CD4-positive, alpha-beta T cell (primary cell): ENCODE measurements at regions of chr10 and their contacts with region 1.

Region 1: GRCh38 chr10:9097206-9097985 is 1042.9 kb downstream of the GATA3 start:
- DNase-seq: peak in 3 of 14 experiments; percentile 58 to 81 (median 70)
- ATAC-seq: peak; percentile 62
- H3K4me3 ChIP-seq: no peak overlapping the region
- H3K4me3 Mint-ChIP-seq: peak overlapping the region; percentile 72
- H3K27ac ChIP-seq: no peak overlapping the region
- H3K27ac Mint-ChIP-seq: peak overlapping the region; percentile 88
- H3K4me1 ChIP-seq: peaks cover 17% of the 10 kb centered on the region
- H3K4me1 Mint-ChIP-seq: peaks cover 43% of the 10 kb centered on the region
- H3K27me3 ChIP-seq: no peaks in the 10 kb centered on the region
- H3K27me3 Mint-ChIP-seq: no peaks in the 10 kb centered on the region
- CTCF ChIP-seq: no peak

Region 2: GRCh38 chr10:8138471-8138870 is 958.9 kb before region 1 on chr10:
- CTCF ChIA-PET with region 1: no interaction called
- POLR2A ChIA-PET with region 1: no interaction called
- intact Hi-C with region 1: loop called in 1 of 2 experiments (anchors 2 kb)
- DNase-seq: no peak
- ATAC-seq: no peak
- H3K4me3 ChIP-seq: no peak overlapping the region
- H3K4me3 Mint-ChIP-seq: peak overlapping the region; percentile 88
- H3K27ac ChIP-seq: no peak overlapping the region
- H3K27ac Mint-ChIP-seq: peak overlapping the region; percentile 90
- H3K4me1 ChIP-seq: peaks cover 23% of the 10 kb centered on the region
- H3K4me1 Mint-ChIP-seq: peaks cover 30% of the 10 kb centered on the region
- H3K27me3 ChIP-seq: no peaks in the 10 kb centered on the region
- H3K27me3 Mint-ChIP-seq: no peaks in the 10 kb centered on the region
- CTCF ChIP-seq: no peak

Region 3: DNA sequence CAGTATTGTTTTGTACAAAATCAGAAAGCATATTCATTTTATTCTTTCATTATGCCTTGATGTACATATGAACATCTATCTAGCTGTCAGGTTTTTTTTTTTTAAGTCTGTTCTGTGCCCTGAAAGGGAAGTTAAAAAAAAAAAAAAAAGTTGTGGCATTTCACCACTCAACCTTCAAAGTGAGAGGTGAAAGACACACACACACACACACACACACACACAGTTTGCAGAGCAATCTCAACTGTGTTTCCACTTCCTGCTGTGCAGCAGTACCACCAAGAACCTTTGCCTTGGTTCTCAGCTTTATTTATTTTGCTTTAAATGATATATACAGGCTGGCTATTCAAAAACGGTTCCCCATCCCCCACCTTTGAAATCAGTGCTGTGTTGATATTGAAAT is 87.3 kb before region 1 on chr10:
- CTCF ChIA-PET with region 1: no interaction called
- POLR2A ChIA-PET with region 1: interaction called, 34 read pairs
- intact Hi-C with region 1: loop called (anchors 2 to 5 kb)
- DNase-seq: peak in 10 of 14 experiments; percentile 8 to 85 (median 54)
- ATAC-seq: peak; percentile 88
- H3K4me3 ChIP-seq: no peak overlapping the region
- H3K4me3 Mint-ChIP-seq: peak overlapping the region; percentile 76
- H3K27ac ChIP-seq: no peak overlapping the region
- H3K27ac Mint-ChIP-seq: peak overlapping the region; percentile 85
- H3K4me1 ChIP-seq: peaks cover 8% of the 10 kb centered on the region
- H3K4me1 Mint-ChIP-seq: peaks cover 63% of the 10 kb centered on the region
- H3K27me3 ChIP-seq: no peaks in the 10 kb centered on the region
- H3K27me3 Mint-ChIP-seq: no peaks in the 10 kb centered on the region
- CTCF ChIP-seq: no peak

Region 4: DNA sequence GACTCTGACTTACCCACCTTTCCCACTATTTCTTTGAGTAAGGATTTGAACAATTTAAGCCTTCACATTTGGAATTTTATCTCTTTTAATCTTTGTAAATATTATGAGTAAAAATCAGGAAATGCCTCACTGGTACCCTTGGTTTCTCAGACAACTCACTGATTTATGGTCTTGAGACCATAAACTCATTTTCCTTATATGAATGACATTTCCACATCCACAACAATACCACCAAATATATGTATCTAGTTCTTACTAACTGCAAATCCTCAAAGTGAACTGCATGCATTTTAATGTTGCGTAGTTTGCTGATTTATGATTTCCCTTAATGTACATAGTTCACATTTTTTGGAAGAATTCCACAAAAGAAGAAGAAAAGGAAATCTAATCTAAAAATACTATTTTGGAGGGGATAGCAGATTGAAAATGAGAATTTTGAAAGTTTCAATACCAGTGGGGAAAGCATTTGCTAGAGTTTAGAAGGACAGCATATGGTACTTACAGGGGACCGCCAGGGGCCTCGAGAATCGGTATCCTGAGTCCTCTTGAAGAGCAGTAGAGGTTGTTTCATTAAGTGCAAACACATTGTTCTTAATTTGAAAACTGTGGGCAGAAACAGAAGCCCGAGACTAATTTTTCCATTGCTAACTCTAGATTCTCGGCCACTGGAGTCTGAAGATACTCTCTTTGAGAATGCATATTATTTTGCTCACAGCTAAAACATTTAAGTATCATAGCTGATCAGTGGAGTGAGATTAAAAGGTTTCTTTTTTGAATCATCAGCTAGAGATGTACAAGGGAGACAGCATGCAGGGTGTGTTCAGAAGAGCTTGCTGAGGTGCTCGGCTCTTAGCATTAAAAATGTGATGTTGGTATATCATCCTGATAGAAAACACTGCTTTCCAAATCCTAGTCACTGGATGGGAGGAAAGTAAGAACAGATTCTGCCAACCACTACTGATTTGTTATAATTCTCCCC is 78.9 kb before region 1 on chr10:
- CTCF ChIA-PET with region 1: no interaction called
- POLR2A ChIA-PET with region 1: interaction called, 9 read pairs
- intact Hi-C with region 1: loop called in 1 of 2 experiments (anchors 5 kb)
- DNase-seq: no peak
- ATAC-seq: no peak
- H3K4me3 ChIP-seq: peak overlapping the region; percentile 31
- H3K4me3 Mint-ChIP-seq: peak overlapping the region; percentile 46
- H3K27ac ChIP-seq: no peak overlapping the region
- H3K27ac Mint-ChIP-seq: peak overlapping the region; percentile 58
- H3K4me1 ChIP-seq: no peaks in the 10 kb centered on the region
- H3K4me1 Mint-ChIP-seq: peaks cover 9% of the 10 kb centered on the region
- H3K27me3 ChIP-seq: no peaks in the 10 kb centered on the region
- H3K27me3 Mint-ChIP-seq: no peaks in the 10 kb centered on the region
- CTCF ChIP-seq: no peak

Region 5: DNA sequence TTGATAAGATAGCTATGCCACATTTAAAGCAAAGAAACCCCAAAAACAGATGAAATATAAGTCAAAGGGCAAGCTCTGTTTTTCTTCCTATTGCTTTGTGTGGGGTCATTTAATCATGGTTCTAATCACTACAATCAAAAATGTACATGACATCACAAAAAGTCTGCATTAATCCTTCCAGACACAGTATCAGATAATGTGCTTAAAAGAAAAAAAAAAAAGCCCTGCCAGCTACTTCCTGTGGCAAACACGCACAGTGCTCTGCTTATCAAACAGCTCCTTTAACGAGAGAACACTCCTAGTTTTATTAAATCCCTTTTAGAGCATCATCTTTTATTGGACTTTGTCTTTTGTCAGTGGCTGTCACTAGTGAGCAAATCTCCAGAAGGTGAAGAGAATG is 37.1 kb before region 1 on chr10:
- CTCF ChIA-PET with region 1: interaction called, 3 read pairs
- POLR2A ChIA-PET with region 1: interaction called, 11 read pairs
- intact Hi-C with region 1: loop called in 1 of 2 experiments (anchors 1 kb)
- DNase-seq: peak in 3 of 14 experiments; percentile 17 to 20 (median 19)
- ATAC-seq: peak; percentile 81
- H3K4me3 ChIP-seq: no peak overlapping the region
- H3K4me3 Mint-ChIP-seq: peak overlapping the region; percentile 80
- H3K27ac ChIP-seq: no peak overlapping the region
- H3K27ac Mint-ChIP-seq: peak overlapping the region; percentile 79
- H3K4me1 ChIP-seq: no peaks in the 10 kb centered on the region
- H3K4me1 Mint-ChIP-seq: peaks cover 21% of the 10 kb centered on the region
- H3K27me3 ChIP-seq: no peaks in the 10 kb centered on the region
- H3K27me3 Mint-ChIP-seq: no peaks in the 10 kb centered on the region
- CTCF ChIP-seq: no peak

Region 6: DNA sequence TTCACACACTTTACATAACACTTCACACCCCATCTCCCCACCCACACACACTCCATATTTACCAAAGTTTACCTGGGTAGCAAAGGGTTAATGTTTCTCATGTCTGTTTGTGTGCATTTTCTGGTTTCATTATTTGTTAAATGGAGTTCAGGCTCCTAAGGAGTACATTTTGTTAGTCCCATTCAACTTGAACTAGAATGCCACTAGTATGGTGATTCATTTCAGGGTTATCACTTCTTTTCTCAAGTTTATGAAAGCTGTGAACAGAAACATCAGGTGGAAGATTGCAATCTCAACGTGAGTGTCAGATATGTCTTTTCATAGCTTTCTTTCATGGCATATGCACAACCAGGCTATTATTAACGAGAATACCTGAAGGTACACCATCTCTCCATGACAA is 15.4 kb before region 1 on chr10:
- CTCF ChIA-PET with region 1: interaction called, 3 read pairs
- POLR2A ChIA-PET with region 1: interaction called, 23 read pairs
- intact Hi-C with region 1: no loop called
- DNase-seq: no peak
- ATAC-seq: no peak
- H3K4me3 ChIP-seq: no peak overlapping the region
- H3K4me3 Mint-ChIP-seq: no peak overlapping the region
- H3K27ac ChIP-seq: no peak overlapping the region
- H3K27ac Mint-ChIP-seq: no peak overlapping the region
- H3K4me1 ChIP-seq: no peaks in the 10 kb centered on the region
- H3K4me1 Mint-ChIP-seq: peaks cover 16% of the 10 kb centered on the region
- H3K27me3 ChIP-seq: no peaks in the 10 kb centered on the region
- H3K27me3 Mint-ChIP-seq: peaks cover 4% of the 10 kb centered on the region
- CTCF ChIP-seq: no peak

Region 7: DNA sequence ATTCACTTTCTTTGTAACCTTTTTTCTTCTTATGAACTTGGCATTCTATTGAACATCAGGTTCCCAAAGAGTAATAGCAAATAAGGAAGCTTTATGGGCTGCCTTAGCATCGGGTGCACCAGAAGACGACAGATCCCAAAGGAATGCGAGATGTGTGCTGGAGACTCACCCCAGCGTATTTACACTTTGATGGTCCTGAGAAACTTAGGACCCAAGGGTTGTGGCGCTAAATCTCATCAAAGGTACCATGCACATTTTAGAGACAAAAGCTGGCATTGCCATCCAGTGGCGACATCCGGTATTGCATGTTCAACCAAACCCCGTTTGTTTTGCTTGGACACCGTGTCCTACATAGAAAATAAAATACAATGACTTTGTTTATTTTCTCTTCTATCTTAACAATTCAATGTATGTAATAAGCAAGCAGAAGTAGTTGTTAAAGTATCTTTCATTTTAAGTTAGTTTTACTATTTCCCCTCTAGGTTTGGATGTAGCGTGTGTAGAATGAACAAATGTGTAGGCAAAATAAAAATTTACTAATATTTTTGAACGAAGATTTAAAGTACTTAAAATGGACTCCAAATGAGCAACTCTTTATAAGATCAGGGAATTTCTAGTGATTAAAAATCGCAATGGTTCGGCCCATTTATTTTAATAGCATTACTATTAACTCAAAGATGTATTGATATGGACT is 111.9 kb after region 1 on chr10:
- CTCF ChIA-PET with region 1: no interaction called
- POLR2A ChIA-PET with region 1: no interaction called
- intact Hi-C with region 1: loop called in 1 of 2 experiments (anchors 5 kb)
- DNase-seq: peak; percentile 51 to 81 (median 69)
- ATAC-seq: peak; percentile 49
- H3K4me3 ChIP-seq: no peak overlapping the region
- H3K4me3 Mint-ChIP-seq: no peak overlapping the region
- H3K27ac ChIP-seq: no peak overlapping the region
- H3K27ac Mint-ChIP-seq: no peak overlapping the region
- H3K4me1 ChIP-seq: peaks cover 3% of the 10 kb centered on the region
- H3K4me1 Mint-ChIP-seq: peaks cover 8% of the 10 kb centered on the region
- H3K27me3 ChIP-seq: peaks cover 0 to 5% of the 10 kb centered on the region in 2 experiments
- H3K27me3 Mint-ChIP-seq: peaks cover 15% of the 10 kb centered on the region
- CTCF ChIP-seq: peak; percentile 98

Region 8: GRCh38 chr10:9342885-9343570 is 245.6 kb after region 1 on chr10:
- CTCF ChIA-PET with region 1: no interaction called
- POLR2A ChIA-PET with region 1: no interaction called
- intact Hi-C with region 1: no loop called
- DNase-seq: peak in 3 of 14 experiments; percentile 26 to 46 (median 42)
- ATAC-seq: peak; percentile 41
- H3K4me3 ChIP-seq: no peak overlapping the region
- H3K4me3 Mint-ChIP-seq: no peak overlapping the region
- H3K27ac ChIP-seq: no peak overlapping the region
- H3K27ac Mint-ChIP-seq: no peak overlapping the region
- H3K4me1 ChIP-seq: no peaks in the 10 kb centered on the region
- H3K4me1 Mint-ChIP-seq: peaks cover 6% of the 10 kb centered on the region
- H3K27me3 ChIP-seq: peaks cover 0 to 3% of the 10 kb centered on the region in 2 experiments
- H3K27me3 Mint-ChIP-seq: no peaks in the 10 kb centered on the region
- CTCF ChIP-seq: no peak